Transverse colon (tissue), 4 donors: ENCODE measurements at regions of chrX and their contacts with region 1.

Region 1: DNA sequence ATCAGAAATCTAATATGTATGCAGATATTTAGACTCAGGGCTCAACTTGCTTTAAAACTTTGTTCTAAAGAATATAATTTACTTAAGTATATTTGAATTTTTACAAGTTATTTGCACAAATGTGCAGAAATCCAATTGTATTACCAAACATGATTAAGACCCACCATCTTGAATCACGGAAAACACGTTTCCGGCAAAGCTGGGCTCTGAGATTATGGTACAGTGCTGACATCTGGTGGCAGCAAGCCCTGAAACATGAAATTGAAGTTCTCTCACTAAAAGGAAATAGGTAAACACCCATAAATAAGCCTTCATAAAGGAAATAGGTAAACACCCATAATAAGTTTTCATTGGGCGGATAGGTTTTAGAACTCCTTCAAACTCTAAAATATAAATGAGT is 98.3 kb upstream of the MAOA start:
- DNase-seq: peak; percentile 65
- H3K4me3 ChIP-seq: no peak overlapping the region
- H3K27ac ChIP-seq: no peak overlapping the region
- H3K4me1 ChIP-seq: peaks cover 0 to 5% (median 2%) of the 10 kb centered on the region in 4 donors
- H3K27me3 ChIP-seq: no peaks in the 10 kb centered on the region
- CTCF ChIP-seq: peak; percentile 43 to 68 (median 56)
- EP300 ChIP-seq: no peak
- POLR2A ChIP-seq: no peak

Region 2: GRCh38 chrX:41781502-41781901 is 1776.3 kb before region 1 on chrX:
- in situ Hi-C with region 1: loop called in 3 of 4 experiments (anchors 25 kb)
- intact Hi-C with region 1: no loop called
- DNase-seq: no peak
- H3K4me3 ChIP-seq: no peak overlapping the region
- H3K27ac ChIP-seq: no peak overlapping the region
- H3K4me1 ChIP-seq: peaks cover 0 to 10% (median 7%) of the 10 kb centered on the region in 4 donors
- H3K27me3 ChIP-seq: no peaks in the 10 kb centered on the region
- CTCF ChIP-seq: peak; percentile 47 to 70 (median 57)
- EP300 ChIP-seq: no peak
- POLR2A ChIP-seq: no peak

Region 3: DNA sequence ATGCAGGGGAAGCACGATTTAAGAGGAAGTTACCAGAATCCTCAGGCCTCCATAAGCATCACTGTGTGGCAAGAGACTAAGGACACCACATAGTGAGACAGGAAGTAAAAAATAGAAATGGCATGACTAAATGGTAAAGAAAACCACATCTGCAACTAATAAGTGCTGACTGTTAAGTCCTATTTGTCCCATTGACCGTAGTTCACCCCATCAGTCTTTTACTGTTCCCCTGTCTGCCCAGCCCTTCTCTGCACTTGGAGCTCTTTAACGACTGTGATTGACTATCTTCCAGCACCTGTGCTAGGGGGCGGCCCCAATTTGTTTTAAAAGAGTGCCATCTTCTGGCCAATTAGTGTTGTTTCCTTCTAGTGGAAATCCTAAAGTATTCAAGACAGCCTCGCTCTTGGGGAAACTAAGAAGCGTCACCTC is 192.5 kb after region 1 on chrX:
- in situ Hi-C with region 1: loop called (anchors 10 to 25 kb)
- intact Hi-C with region 1: loop called (anchors 5 kb)
- DNase-seq: peak; percentile 61
- H3K4me3 ChIP-seq: no peak overlapping the region
- H3K27ac ChIP-seq: peak overlapping the region in 3 of 4 donors; percentile 18 to 31 (median 20)
- H3K4me1 ChIP-seq: peaks cover 0 to 27% (median 8%) of the 10 kb centered on the region in 4 donors
- H3K27me3 ChIP-seq: no peaks in the 10 kb centered on the region
- CTCF ChIP-seq: peak; percentile 39 to 68 (median 49)
- EP300 ChIP-seq: no peak
- POLR2A ChIP-seq: no peak

Region 4: DNA sequence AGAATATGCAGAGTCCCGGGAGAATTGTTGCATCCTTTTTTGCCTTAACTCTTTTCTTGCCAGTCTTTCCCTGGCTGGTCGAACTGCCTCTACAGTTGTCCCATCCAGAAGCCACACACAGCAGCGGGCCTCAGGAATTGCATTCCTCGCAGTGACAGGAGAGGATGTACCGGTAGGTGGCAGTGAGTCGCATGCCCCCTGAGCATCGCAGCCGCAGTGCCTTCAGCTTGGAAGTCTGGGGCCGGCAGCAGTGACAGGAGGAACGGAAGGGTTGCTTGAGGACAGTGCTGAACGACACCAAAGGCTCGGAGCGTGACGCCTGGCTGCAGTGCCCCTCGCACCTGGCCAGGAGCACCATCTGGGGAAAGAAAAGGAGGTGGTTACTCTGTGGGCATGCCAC is 391.9 kb after region 1 on chrX:
- in situ Hi-C with region 1: loop called in 1 of 4 experiments (anchors 25 kb)
- intact Hi-C with region 1: no loop called
- DNase-seq: peak; percentile 22
- H3K4me3 ChIP-seq: no peak overlapping the region
- H3K27ac ChIP-seq: no peak overlapping the region
- H3K4me1 ChIP-seq: no peaks in the 10 kb centered on the region
- H3K27me3 ChIP-seq: no peaks in the 10 kb centered on the region
- CTCF ChIP-seq: peak in 4 of 5 experiments; percentile 19 to 33 (median 30)
- EP300 ChIP-seq: no peak
- POLR2A ChIP-seq: no peak